ENCODE measurements at regions of chr16 and their contacts with region 1.

Region 1: GRCh38 chr16:24070851-24071250 is 185.3 kb upstream of the CACNG3 start:
- DNase-seq: peak; percentile 60 to 75
- H3K4me3 ChIP-seq: no peak overlapping the region
- H3K27ac ChIP-seq: no peak overlapping the region
- H3K4me1 ChIP-seq: peaks cover 0 to under 1% (median 0%) of the 10 kb centered on the region in 4 experiments; a peak in 1 of 7 replicates
- H3K27me3 ChIP-seq: no peaks in the 10 kb centered on the region
- CTCF ChIP-seq: peak; percentile 68 to 95 (median 83)
- EP300 ChIP-seq: no peak
- POLR2A ChIP-seq: no peak
- RAD21 ChIP-seq: peak; percentile 95 to 97

Region 2: GRCh38 chr16:24015923-24016322 is 54.9 kb before region 1 on chr16:
- CTCF ChIA-PET with region 1: no interaction called
- POLR2A ChIA-PET with region 1: no interaction called
- DNase-seq: no peak
- H3K4me3 ChIP-seq: no peak overlapping the region
- H3K27ac ChIP-seq: no peak overlapping the region
- H3K4me1 ChIP-seq: peaks cover 0 to 3% (median 0%) of the 10 kb centered on the region in 4 experiments; a peak in 1 of 7 replicates
- H3K27me3 ChIP-seq: no peaks in the 10 kb centered on the region
- CTCF ChIP-seq: no peak; a peak in 1 of 4 replicates
- EP300 ChIP-seq: no peak
- POLR2A ChIP-seq: no peak
- RAD21 ChIP-seq: no peak

Region 3: DNA sequence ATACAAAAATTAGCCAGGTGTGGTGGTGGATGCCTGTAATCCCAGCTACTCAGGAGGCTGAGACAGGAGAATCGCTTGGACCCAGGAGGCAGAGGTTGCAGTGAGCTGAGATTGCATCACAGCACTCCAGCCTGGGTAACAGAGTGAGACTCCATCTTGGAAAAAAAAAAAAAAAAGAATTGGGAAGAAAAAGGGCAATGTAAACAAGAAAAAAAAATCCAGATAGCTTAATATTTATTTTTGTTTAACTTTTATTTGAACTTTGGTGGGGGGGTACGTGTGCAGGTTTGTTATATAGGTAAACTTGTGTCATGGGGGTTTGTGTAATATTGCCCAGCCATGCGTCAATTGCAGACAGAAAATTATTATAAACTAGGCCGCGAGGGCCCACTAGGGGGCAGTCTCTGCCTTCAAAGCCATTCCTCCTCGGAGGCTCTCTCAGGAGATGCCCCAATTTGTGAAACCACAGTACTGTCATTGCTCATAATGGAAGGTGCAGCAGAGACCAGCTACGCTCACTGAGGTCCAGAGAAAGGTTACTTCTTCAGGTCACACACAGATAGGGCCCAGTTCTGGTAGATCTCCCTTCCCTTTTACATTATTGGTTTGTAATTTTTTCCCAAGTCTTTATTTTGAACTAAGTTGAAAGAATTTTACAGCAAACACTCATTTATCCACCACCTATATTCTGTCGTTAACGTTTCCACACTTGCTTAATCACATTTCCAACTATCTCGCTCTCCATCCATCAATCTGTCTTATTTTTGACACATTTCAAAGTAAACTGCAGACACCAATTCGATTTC is 28.8 kb before region 1 on chr16:
- CTCF ChIA-PET with region 1: interaction called, 18 read pairs
- POLR2A ChIA-PET with region 1: no interaction called
- DNase-seq: peak; percentile 36 to 88
- H3K4me3 ChIP-seq: no peak overlapping the region
- H3K27ac ChIP-seq: no peak overlapping the region
- H3K4me1 ChIP-seq: peaks cover 0 to 12% (median 6%) of the 10 kb centered on the region in 4 experiments; a peak in 5 of 7 replicates
- H3K27me3 ChIP-seq: no peaks in the 10 kb centered on the region
- CTCF ChIP-seq: peak; percentile 73 to 83 (median 75)
- EP300 ChIP-seq: no peak
- POLR2A ChIP-seq: no peak
- RAD21 ChIP-seq: peak; percentile 89 to 90

Region 4: GRCh38 chr16:24093049-24093448 is 22.2 kb after region 1 on chr16:
- CTCF ChIA-PET with region 1: interaction called, 10 read pairs
- POLR2A ChIA-PET with region 1: no interaction called
- DNase-seq: no peak
- H3K4me3 ChIP-seq: no peak overlapping the region
- H3K27ac ChIP-seq: no peak overlapping the region
- H3K4me1 ChIP-seq: peaks cover 2 to 6% (median 5%) of the 10 kb centered on the region in 4 experiments; a peak in 4 of 7 replicates
- H3K27me3 ChIP-seq: no peaks in the 10 kb centered on the region
- CTCF ChIP-seq: no peak
- EP300 ChIP-seq: no peak
- POLR2A ChIP-seq: no peak
- RAD21 ChIP-seq: no peak

Region 5: GRCh38 chr16:24141466-24141865 is 70.6 kb after region 1 on chr16:
- CTCF ChIA-PET with region 1: interaction called, 12 read pairs
- POLR2A ChIA-PET with region 1: no interaction called
- DNase-seq: no peak
- H3K4me3 ChIP-seq: no peak overlapping the region
- H3K27ac ChIP-seq: no peak overlapping the region
- H3K4me1 ChIP-seq: peaks cover 4 to 24% (median 17%) of the 10 kb centered on the region in 4 experiments; a peak in 6 of 7 replicates
- H3K27me3 ChIP-seq: no peaks in the 10 kb centered on the region
- CTCF ChIP-seq: no peak
- EP300 ChIP-seq: no peak
- POLR2A ChIP-seq: no peak
- RAD21 ChIP-seq: no peak

Region 6: GRCh38 chr16:24189941-24190340 is 119.1 kb after region 1 on chr16:
- CTCF ChIA-PET with region 1: interaction called, 13 read pairs
- POLR2A ChIA-PET with region 1: no interaction called
- DNase-seq: no peak
- H3K4me3 ChIP-seq: no peak overlapping the region
- H3K27ac ChIP-seq: no peak overlapping the region
- H3K4me1 ChIP-seq: peaks cover 0 to 5% (median 2%) of the 10 kb centered on the region in 4 experiments; a peak in 3 of 7 replicates
- H3K27me3 ChIP-seq: no peaks in the 10 kb centered on the region
- CTCF ChIP-seq: no peak
- EP300 ChIP-seq: no peak
- POLR2A ChIP-seq: no peak
- RAD21 ChIP-seq: no peak

Region 7: GRCh38 chr16:24253192-24253591 is 182.3 kb after region 1 on chr16:
- CTCF ChIA-PET with region 1: interaction called, 124 read pairs
- POLR2A ChIA-PET with region 1: no interaction called
- DNase-seq: peak; percentile 33 to 54
- H3K4me3 ChIP-seq: no peak overlapping the region
- H3K27ac ChIP-seq: no peak overlapping the region
- H3K4me1 ChIP-seq: peaks cover 0 to 4% (median under 1%) of the 10 kb centered on the region in 4 experiments; a peak in 3 of 7 replicates
- H3K27me3 ChIP-seq: peaks cover 5 to 25% (median 15%) of the 10 kb centered on the region in 4 experiments
- CTCF ChIP-seq: peak; percentile 0 to 79 (median 79)
- EP300 ChIP-seq: no peak
- POLR2A ChIP-seq: no peak
- RAD21 ChIP-seq: peak; percentile 79 to 90

Region 8: DNA sequence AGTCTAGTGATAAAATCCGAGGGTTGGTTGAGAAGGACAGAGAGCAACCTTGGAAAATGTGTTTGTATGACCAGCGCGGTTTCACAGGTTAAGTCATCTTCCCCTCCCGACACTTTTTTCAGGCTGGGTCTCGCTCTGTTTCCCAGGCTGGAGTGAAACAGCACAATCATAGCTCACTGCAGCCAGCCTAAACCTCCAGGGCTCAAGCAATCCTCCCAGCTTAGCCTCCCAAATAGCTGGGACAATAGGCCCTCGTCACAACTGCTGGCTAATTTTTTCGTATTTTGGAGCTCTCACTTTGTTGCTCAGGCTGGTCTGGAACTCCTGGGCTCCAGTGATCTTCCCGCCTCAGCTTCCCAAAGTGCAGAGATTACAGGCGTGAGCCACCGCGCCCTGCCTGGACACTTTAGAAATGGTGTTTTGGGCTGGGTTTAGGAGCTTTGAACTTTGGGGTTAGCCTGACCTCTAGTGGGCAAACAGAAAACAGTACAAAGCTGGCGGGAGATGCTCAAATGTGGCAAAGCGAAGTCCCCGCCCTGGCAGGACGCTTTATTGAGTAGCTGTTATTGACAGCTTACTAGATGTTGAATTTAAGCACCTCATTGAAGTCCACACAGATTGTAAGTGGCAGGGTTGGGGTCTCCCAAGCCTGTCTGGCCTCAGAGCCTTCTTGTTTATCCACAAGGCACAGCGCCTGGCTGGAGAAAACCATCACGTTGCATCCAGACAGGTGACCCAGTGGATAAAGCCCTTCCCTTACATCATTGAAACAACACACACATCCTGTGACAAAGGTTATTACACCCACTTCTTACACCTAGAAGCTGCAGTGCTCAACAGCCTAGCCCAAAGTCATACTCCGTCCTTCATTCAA is 433.9 kb after region 1 on chr16:
- CTCF ChIA-PET with region 1: interaction called, 19 read pairs
- POLR2A ChIA-PET with region 1: no interaction called
- DNase-seq: peak; percentile 38 to 72
- H3K4me3 ChIP-seq: no peak overlapping the region
- H3K27ac ChIP-seq: no peak overlapping the region
- H3K4me1 ChIP-seq: no peaks in the 10 kb centered on the region
- H3K27me3 ChIP-seq: no peaks in the 10 kb centered on the region; a peak in 1 of 7 replicates
- CTCF ChIP-seq: peak; percentile 58 to 92 (median 84)
- EP300 ChIP-seq: no peak
- POLR2A ChIP-seq: no peak
- RAD21 ChIP-seq: peak; percentile 95 to 98

Measured in H1 (cell line).